CD8-positive, alpha-beta T cell (primary cell): ENCODE measurements at regions of chr16 and their contacts with region 1.

Region 1: GRCh38 chr16:84186685-84187437 is at the start of gene TAF1C:
- DNase-seq: peak; percentile 75 to 95 (median 88)
- ATAC-seq: peak; percentile 97
- H3K4me3 ChIP-seq: peak within 1 kb of the TSS; percentile 87 to 100
- H3K4me3 Mint-ChIP-seq: peak within 1 kb of the TSS; percentile 91
- H3K27ac ChIP-seq: peak within 1 kb of the TSS; percentile 71 to 77
- H3K27ac Mint-ChIP-seq: peak within 1 kb of the TSS; percentile 94
- H3K4me1 ChIP-seq: peaks cover 6% of the 10 kb centered on the region
- H3K4me1 Mint-ChIP-seq: peaks cover 20% of the 10 kb centered on the region
- H3K27me3 ChIP-seq: no peaks in the 10 kb centered on the region
- H3K27me3 Mint-ChIP-seq: no peaks in the 10 kb centered on the region
- CTCF ChIP-seq: peak; percentile 89
- total RNA-seq, gene TAF1C: 86.0 to 92.6 TPM

Region 2: DNA sequence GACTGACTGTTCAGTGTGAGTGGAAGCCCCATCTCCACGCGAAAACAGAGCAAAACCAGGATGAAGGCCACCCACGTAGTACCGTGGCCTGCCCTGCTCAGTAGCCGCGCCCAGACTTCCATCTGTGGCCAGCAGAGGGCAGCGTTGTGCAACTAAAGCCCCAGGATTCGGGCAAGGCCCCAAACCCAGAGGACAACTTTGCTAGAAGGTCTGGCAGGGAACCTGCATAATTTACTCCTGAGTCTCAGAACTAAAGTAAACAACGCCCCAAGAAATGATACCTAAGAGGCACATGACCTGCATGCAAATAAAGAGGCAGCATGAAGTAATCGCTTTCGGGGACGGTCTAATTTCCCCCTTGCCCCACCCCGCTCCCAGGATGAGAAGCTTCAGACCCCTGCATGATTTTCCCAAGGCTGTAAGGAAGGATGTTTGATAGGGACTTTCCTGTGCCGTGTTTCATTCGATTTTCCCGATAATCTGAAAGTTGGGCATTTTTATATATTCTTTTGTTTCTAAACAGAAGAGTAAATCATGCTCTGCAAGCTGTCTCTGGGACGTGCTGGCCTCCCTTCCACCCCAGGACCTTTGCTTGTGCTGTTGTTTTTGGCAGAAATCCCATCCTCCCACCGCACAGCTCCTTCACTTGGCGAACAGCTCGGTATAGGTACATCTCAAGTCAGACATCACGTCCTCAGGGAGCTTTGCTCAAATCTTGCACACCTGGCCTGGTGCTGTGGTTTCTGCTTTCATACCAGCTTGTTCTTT is 360.5 kb before region 1 on chr16:
- CTCF ChIA-PET with region 1: no interaction called
- POLR2A ChIA-PET with region 1: no interaction called
- intact Hi-C with region 1: loop called in 1 of 2 experiments (anchors 5 kb)
- DNase-seq: peak; percentile 60 to 88 (median 75)
- ATAC-seq: peak; percentile 97
- H3K4me3 ChIP-seq: no peak overlapping the region
- H3K4me3 Mint-ChIP-seq: no peak overlapping the region
- H3K27ac ChIP-seq: no peak overlapping the region
- H3K27ac Mint-ChIP-seq: no peak overlapping the region
- H3K4me1 ChIP-seq: no peaks in the 10 kb centered on the region
- H3K4me1 Mint-ChIP-seq: peaks cover 4% of the 10 kb centered on the region
- H3K27me3 ChIP-seq: peaks cover 0 to 3% of the 10 kb centered on the region in 2 experiments
- H3K27me3 Mint-ChIP-seq: peaks cover 6% of the 10 kb centered on the region
- CTCF ChIP-seq: peak; percentile 87

Region 3: GRCh38 chr16:83952940-83953795 is 233.7 kb before region 1 on chr16 and contains the start of gene OSGIN1:
- CTCF ChIA-PET with region 1: interaction called, 6 read pairs
- POLR2A ChIA-PET with region 1: no interaction called
- intact Hi-C with region 1: loop called (anchors 1 kb)
- DNase-seq: peak in 7 of 9 experiments; percentile 31 to 62 (median 36)
- ATAC-seq: peak; percentile 57
- H3K4me3 ChIP-seq: no peak within 1 kb of the TSS
- H3K4me3 Mint-ChIP-seq: no peak within 1 kb of the TSS
- H3K27ac ChIP-seq: no peak within 1 kb of the TSS
- H3K27ac Mint-ChIP-seq: no peak within 1 kb of the TSS
- H3K4me1 ChIP-seq: no peaks in the 10 kb centered on the region
- H3K4me1 Mint-ChIP-seq: peaks cover 2% of the 10 kb centered on the region
- H3K27me3 ChIP-seq: peaks cover 0 to 28% of the 10 kb centered on the region in 2 experiments
- H3K27me3 Mint-ChIP-seq: peaks cover 19% of the 10 kb centered on the region
- CTCF ChIP-seq: no peak
- total RNA-seq, gene OSGIN1: 0.84 to 1.0 TPM

Region 4: GRCh38 chr16:84116720-84117493 is 70.0 kb before region 1 on chr16 and contains the start of gene MBTPS1:
- CTCF ChIA-PET with region 1: interaction called, 15 read pairs
- POLR2A ChIA-PET with region 1: interaction called, 12 read pairs
- intact Hi-C with region 1: loop called (anchors 1 kb)
- DNase-seq: peak; percentile 96 to 99 (median 98)
- ATAC-seq: peak; percentile 83
- H3K4me3 ChIP-seq: peak within 1 kb of the TSS; percentile 86 to 95
- H3K4me3 Mint-ChIP-seq: peak within 1 kb of the TSS; percentile 90
- H3K27ac ChIP-seq: peak within 1 kb of the TSS; percentile 82 to 91
- H3K27ac Mint-ChIP-seq: peak within 1 kb of the TSS; percentile 94
- H3K4me1 ChIP-seq: peaks cover 19% of the 10 kb centered on the region
- H3K4me1 Mint-ChIP-seq: peaks cover 30% of the 10 kb centered on the region
- H3K27me3 ChIP-seq: no peaks in the 10 kb centered on the region
- H3K27me3 Mint-ChIP-seq: no peaks in the 10 kb centered on the region
- CTCF ChIP-seq: peak; percentile 5
- total RNA-seq, gene MBTPS1: 128 to 130 TPM

Region 5: GRCh38 chr16:84175350-84176081 is 11.3 kb before region 1 on chr16:
- CTCF ChIA-PET with region 1: interaction called, 27 read pairs
- POLR2A ChIA-PET with region 1: interaction called, 4 read pairs
- intact Hi-C with region 1: no loop called
- DNase-seq: peak in 8 of 9 experiments; percentile 49 to 69 (median 60)
- ATAC-seq: peak; percentile 98
- H3K4me3 ChIP-seq: no peak overlapping the region
- H3K4me3 Mint-ChIP-seq: no peak overlapping the region
- H3K27ac ChIP-seq: no peak overlapping the region
- H3K27ac Mint-ChIP-seq: peak overlapping the region; percentile 27
- H3K4me1 ChIP-seq: no peaks in the 10 kb centered on the region
- H3K4me1 Mint-ChIP-seq: peaks cover 4% of the 10 kb centered on the region
- H3K27me3 ChIP-seq: no peaks in the 10 kb centered on the region
- H3K27me3 Mint-ChIP-seq: peaks cover 2% of the 10 kb centered on the region
- CTCF ChIP-seq: peak; percentile 85

Region 6: DNA sequence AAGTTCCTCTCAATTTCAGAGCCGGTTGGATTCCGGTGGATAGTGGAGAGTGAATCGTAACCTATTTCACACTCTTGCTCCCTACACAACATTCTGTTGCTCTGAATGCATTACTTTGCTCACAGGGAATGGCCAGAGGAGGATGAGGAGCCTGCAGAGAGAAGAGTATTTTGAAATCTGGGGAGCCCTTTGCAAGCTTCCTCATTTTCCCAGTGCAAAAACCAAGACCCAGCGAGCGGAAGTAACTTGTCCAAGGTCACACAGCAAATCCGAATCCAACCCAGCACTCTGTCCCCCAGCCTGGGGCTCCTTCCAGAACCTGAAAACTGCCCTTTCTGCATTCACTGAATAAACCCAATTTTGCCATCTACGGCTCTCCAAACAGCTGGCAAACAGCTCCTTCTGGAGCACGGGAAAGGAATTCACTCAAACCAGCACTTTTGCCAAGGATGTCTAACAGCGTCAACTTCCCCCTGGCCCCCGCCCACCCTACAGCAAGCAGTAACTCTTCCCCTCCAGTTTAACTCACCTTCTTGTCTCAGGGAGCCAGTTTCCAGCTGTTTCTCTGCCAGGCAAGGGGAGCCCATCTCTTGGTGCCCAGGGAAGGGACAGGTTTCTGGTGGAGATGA is 52.4 kb after region 1 on chr16:
- CTCF ChIA-PET with region 1: no interaction called
- POLR2A ChIA-PET with region 1: no interaction called
- intact Hi-C with region 1: no loop called
- DNase-seq: no peak
- ATAC-seq: no peak
- H3K4me3 ChIP-seq: no peak overlapping the region
- H3K4me3 Mint-ChIP-seq: no peak overlapping the region
- H3K27ac ChIP-seq: no peak overlapping the region
- H3K27ac Mint-ChIP-seq: no peak overlapping the region
- H3K4me1 ChIP-seq: no peaks in the 10 kb centered on the region
- H3K4me1 Mint-ChIP-seq: no peaks in the 10 kb centered on the region
- H3K27me3 ChIP-seq: no peaks in the 10 kb centered on the region
- H3K27me3 Mint-ChIP-seq: peaks cover 40% of the 10 kb centered on the region
- CTCF ChIP-seq: no peak

Region 7: GRCh38 chr16:84308120-84308519 is 121.3 kb after region 1 on chr16:
- CTCF ChIA-PET with region 1: no interaction called
- POLR2A ChIA-PET with region 1: no interaction called
- intact Hi-C with region 1: no loop called
- DNase-seq: peak in 1 of 9 experiments; percentile 26
- ATAC-seq: no peak
- H3K4me3 ChIP-seq: no peak overlapping the region
- H3K4me3 Mint-ChIP-seq: no peak overlapping the region
- H3K27ac ChIP-seq: no peak overlapping the region
- H3K27ac Mint-ChIP-seq: no peak overlapping the region
- H3K4me1 ChIP-seq: no peaks in the 10 kb centered on the region
- H3K4me1 Mint-ChIP-seq: peaks cover 2% of the 10 kb centered on the region
- H3K27me3 ChIP-seq: no peaks in the 10 kb centered on the region
- H3K27me3 Mint-ChIP-seq: peaks cover 35% of the 10 kb centered on the region
- CTCF ChIP-seq: no peak